Activated CD8-positive, alpha-beta memory T cell treated with anti-CD3 and anti-CD28 coated beads, Interleukin-2, amount 10 ng/mL, durations not matched to agents 7 days and 5 days (primary cell): ENCODE measurements at regions of chr1 and their contacts with region 1.

Region 1: GRCh38 chr1:116514708-116515525 is 55.9 kb downstream of the CD58 start:
- DNase-seq: peak; percentile 86
- ATAC-seq: peak; percentile 83
- H3K4me3 Mint-ChIP-seq: peak overlapping the region; percentile 39
- H3K27ac Mint-ChIP-seq: peak overlapping the region; percentile 93
- H3K4me1 Mint-ChIP-seq: peaks cover 77% of the 10 kb centered on the region
- H3K27me3 Mint-ChIP-seq: no peaks in the 10 kb centered on the region

Region 2: GRCh38 chr1:116504308-116505156 is 10.4 kb before region 1 on chr1:
- CTCF ChIA-PET with region 1: interaction called, 38 read pairs
- DNase-seq: peak; percentile 96
- ATAC-seq: peak; percentile 94
- H3K4me3 Mint-ChIP-seq: peak overlapping the region; percentile 18
- H3K27ac Mint-ChIP-seq: peak overlapping the region; percentile 92
- H3K4me1 Mint-ChIP-seq: peaks cover 76% of the 10 kb centered on the region
- H3K27me3 Mint-ChIP-seq: no peaks in the 10 kb centered on the region